Activated B cell treated with CpG ODN at 0.5 μM for 24 hours (primary cell): ENCODE measurements at regions of chr9 and their contacts with region 1.

Region 1: GRCh38 chr9:34989003-34989945 is at the start of gene DNAJB5:
- DNase-seq: peak; percentile 96
- ATAC-seq: peak; percentile 91
- H3K4me3 Mint-ChIP-seq: peak within 1 kb of the TSS; percentile 97
- H3K27ac Mint-ChIP-seq: peak within 1 kb of the TSS; percentile 92
- H3K4me1 Mint-ChIP-seq: peaks cover 77% of the 10 kb centered on the region
- H3K27me3 Mint-ChIP-seq: peaks cover 2% of the 10 kb centered on the region
- CTCF ChIP-seq: no peak
- total RNA-seq, gene DNAJB5: 5.4 and 6.4 TPM in 2 replicates

Region 2: DNA sequence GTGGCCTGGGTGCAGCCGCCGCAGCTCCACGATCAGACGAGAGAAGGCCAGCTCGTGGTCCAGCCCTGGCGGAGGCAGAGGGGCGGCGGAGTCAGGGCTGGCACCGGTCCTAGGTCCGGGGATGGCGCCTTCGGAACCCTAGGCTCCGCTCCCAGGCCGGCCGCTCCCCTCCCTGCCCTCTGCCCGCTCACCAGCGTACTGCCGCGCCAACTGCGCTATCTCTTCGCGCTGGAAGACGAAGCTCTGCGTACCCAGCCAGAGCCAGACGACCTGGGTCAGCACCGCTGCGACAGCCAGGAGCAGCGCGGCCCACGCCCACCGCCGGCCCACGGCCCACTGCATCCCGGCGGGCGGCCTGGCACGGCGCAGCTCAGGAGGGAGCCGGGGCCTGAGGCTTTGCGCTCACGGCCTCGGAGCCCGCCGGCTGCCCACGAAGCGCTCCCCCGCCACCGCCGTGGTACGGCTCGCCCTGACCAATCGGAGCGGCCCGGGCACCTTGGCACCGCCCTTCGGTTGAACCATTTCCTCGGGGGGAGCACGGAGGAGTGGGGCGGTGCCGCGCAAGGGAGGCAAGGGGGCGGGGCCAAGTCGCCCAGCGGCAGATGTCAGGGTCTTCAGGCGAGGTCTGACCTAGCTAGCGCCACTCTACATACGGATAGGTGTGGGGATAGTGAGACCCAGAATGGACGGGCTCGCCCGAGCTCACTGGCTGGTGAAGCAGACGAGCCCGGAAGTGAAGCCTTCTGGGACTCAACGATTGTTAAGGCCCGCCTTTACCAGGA is 351.7 kb before region 1 on chr9 and contains the start of gene SIGMAR1:
- CTCF ChIA-PET with region 1: no interaction called
- POLR2A ChIA-PET with region 1: no interaction called
- intact Hi-C with region 1: loop called (anchors 10 kb)
- DNase-seq: peak; percentile 93
- ATAC-seq: peak; percentile 95
- H3K4me3 Mint-ChIP-seq: peak within 1 kb of the TSS; percentile 87
- H3K27ac Mint-ChIP-seq: peak within 1 kb of the TSS; percentile 78
- H3K4me1 Mint-ChIP-seq: peaks cover 29% of the 10 kb centered on the region
- H3K27me3 Mint-ChIP-seq: no peaks in the 10 kb centered on the region
- CTCF ChIP-seq: no peak
- total RNA-seq, gene SIGMAR1: 27.2 TPM in 2 replicates

Region 3: GRCh38 chr9:35051069-35051967 is 62.0 kb after region 1 on chr9:
- CTCF ChIA-PET with region 1: interaction called, 13 read pairs
- POLR2A ChIA-PET with region 1: no interaction called
- intact Hi-C with region 1: loop called (anchors 1 kb)
- DNase-seq: no peak
- ATAC-seq: peak; percentile 71
- H3K4me3 Mint-ChIP-seq: no peak overlapping the region
- H3K27ac Mint-ChIP-seq: no peak overlapping the region
- H3K4me1 Mint-ChIP-seq: peaks cover 5% of the 10 kb centered on the region
- H3K27me3 Mint-ChIP-seq: no peaks in the 10 kb centered on the region
- CTCF ChIP-seq: no peak

Region 4: GRCh38 chr9:35096035-35096849 is 107.0 kb after region 1 on chr9 and contains the start of gene PIGO:
- CTCF ChIA-PET with region 1: no interaction called
- POLR2A ChIA-PET with region 1: interaction called, 3 read pairs
- intact Hi-C with region 1: loop called (anchors 1 kb)
- DNase-seq: peak; percentile 81
- ATAC-seq: peak; percentile 92
- H3K4me3 Mint-ChIP-seq: peak within 1 kb of the TSS; percentile 87
- H3K27ac Mint-ChIP-seq: peak within 1 kb of the TSS; percentile 93
- H3K4me1 Mint-ChIP-seq: peaks cover 30% of the 10 kb centered on the region
- H3K27me3 Mint-ChIP-seq: no peaks in the 10 kb centered on the region
- CTCF ChIP-seq: peak; percentile 60
- total RNA-seq, gene PIGO: 30.4 and 34.1 TPM in 2 replicates

Region 5: GRCh38 chr9:35161713-35162604 is 172.7 kb after region 1 on chr9 and contains the start of gene UNC13B:
- CTCF ChIA-PET with region 1: no interaction called
- POLR2A ChIA-PET with region 1: no interaction called
- intact Hi-C with region 1: loop called (anchors 1 kb)
- DNase-seq: peak; percentile 72
- ATAC-seq: peak; percentile 95
- H3K4me3 Mint-ChIP-seq: peak within 1 kb of the TSS; percentile 89
- H3K27ac Mint-ChIP-seq: no peak within 1 kb of the TSS
- H3K4me1 Mint-ChIP-seq: peaks cover 24% of the 10 kb centered on the region
- H3K27me3 Mint-ChIP-seq: peaks cover 8% of the 10 kb centered on the region
- CTCF ChIP-seq: no peak
- total RNA-seq, gene UNC13B: 0.53 and 0.78 TPM in 2 replicates

Region 6: GRCh38 chr9:35954942-35955546 is 965.8 kb after region 1 on chr9:
- CTCF ChIA-PET with region 1: no interaction called
- POLR2A ChIA-PET with region 1: no interaction called
- intact Hi-C with region 1: no loop called
- DNase-seq: no peak
- ATAC-seq: peak; percentile 75
- H3K4me3 Mint-ChIP-seq: no peak overlapping the region
- H3K27ac Mint-ChIP-seq: no peak overlapping the region
- H3K4me1 Mint-ChIP-seq: no peaks in the 10 kb centered on the region
- H3K27me3 Mint-ChIP-seq: peaks cover 22% of the 10 kb centered on the region
- CTCF ChIP-seq: peak; percentile 86